Endothelial cell of umbilical vein (primary cell): ENCODE measurements at regions of chr5 and their contacts with region 1.

Region 1: DNA sequence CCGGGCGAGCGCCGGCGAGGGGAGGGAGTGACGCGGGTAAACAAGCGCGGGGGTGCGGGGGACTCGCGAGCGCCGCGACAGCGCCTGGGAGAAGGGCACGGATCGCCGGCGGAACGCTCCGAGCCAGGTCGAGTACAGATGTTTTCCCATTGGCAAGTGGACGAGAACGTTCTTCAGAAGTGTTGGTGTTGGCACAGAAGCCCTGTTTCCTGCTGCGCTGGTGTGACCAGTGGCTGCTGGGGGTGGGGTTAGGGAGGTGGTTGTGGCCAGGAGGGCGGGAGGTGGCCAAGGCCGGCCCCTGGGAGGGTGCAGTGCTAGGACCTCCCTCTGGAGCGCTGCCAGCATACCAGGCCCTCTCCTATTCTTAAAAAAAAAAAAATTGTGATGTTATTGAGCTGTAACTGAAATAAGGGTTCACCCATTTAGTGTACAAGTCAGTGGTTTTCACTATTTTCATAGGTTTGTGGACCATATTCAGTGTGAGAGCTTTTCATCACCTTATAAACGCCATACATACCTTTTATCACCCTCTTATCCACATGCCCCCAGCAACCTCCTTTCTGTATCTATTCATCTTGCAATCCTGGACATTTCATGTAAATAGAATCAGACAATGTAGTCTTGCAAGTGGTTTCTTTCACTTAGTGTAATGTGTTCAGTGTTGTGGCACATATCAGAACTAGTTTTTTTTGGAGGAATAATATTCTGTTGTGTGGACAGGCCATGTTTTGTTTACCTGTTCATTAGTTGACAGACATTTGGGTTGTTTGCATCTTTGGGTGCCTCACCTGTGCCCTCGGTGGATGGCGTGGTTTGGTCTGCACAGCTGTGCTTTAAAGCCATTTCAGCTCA is 1.1 kb downstream of the SQSTM1 start:
- DNase-seq: peak; percentile 93
- H3K4me3 ChIP-seq: peak overlapping the region; percentile 49 to 90 (median 82)
- H3K27ac ChIP-seq: peak overlapping the region; percentile 96
- H3K4me1 ChIP-seq: peaks cover 37% of the 10 kb centered on the region
- H3K27me3 ChIP-seq: no peaks in the 10 kb centered on the region
- CTCF ChIP-seq: no peak
- POLR2A ChIP-seq: peak; percentile 85

Region 2: DNA sequence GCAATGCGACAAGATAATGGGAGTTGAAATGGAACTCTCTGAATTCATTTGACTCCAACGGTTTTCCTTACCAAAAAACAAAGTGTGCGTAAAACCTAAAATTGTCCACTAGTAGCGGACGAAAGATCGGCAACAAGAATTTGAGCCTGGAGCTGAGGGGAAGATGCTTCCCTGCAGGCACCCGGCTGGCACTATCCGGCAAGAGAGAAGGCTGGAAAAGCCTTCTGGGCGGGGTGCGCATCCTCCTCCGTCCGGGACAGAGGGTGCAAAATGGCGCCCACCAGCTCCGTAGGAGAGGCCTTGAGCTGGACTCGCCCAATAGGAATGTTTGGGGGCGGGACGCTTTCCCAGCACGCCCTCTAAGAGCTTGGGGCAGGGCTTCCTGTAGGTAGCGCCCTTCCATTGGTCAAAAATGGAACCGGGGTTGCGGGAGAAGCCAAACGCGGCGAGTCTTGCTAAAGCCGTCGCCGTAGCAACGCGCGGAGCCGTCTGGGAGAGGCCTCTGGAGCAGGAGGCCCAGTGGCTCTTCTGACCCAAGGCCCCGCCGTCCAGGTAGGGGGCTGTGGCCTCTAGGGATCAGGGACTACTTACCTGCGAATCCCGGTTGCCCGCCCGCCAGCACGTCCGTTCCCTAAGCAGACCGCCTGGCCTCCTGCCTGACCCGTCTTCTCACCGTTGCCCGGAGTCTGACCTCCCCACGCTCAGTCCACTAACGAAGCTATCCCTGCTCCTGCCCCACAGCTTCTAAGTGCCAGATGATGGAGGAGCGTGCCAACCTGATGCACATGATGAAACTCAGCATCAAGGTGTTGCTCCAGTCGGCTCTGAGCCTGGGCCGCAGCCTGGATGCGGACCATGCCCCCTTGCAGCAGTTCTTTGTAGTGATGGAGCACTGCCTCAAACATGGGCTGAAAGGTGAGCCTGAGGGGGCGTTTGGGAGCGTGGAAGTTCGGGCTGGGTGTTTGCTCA is 262.2 kb before region 1 on chr5:
- CTCF ChIA-PET with region 1: no interaction called
- POLR2A ChIA-PET with region 1: interaction called, 3 read pairs
- dilution Hi-C with region 1: no loop called
- intact Hi-C with region 1: loop called (anchors 5 kb)
- DNase-seq: peak; percentile 98
- H3K4me3 ChIP-seq: peak overlapping the region; percentile 22 to 83 (median 48)
- H3K27ac ChIP-seq: peak overlapping the region; percentile 56
- H3K4me1 ChIP-seq: peaks cover 13% of the 10 kb centered on the region
- H3K27me3 ChIP-seq: no peaks in the 10 kb centered on the region
- CTCF ChIP-seq: no peak
- POLR2A ChIP-seq: peak; percentile 90

Region 3: GRCh38 chr5:179678223-179679013 is 143.4 kb before region 1 on chr5:
- CTCF ChIA-PET with region 1: no interaction called
- POLR2A ChIA-PET with region 1: no interaction called
- dilution Hi-C with region 1: no loop called
- intact Hi-C with region 1: loop called (anchors 2 kb)
- DNase-seq: peak; percentile 96
- H3K4me3 ChIP-seq: peak overlapping the region; percentile 62 to 64 (median 63)
- H3K27ac ChIP-seq: peak overlapping the region; percentile 35
- H3K4me1 ChIP-seq: no peaks in the 10 kb centered on the region
- H3K27me3 ChIP-seq: no peaks in the 10 kb centered on the region
- CTCF ChIP-seq: no peak
- POLR2A ChIP-seq: peak; percentile 98

Region 4: GRCh38 chr5:179732417-179732917 is 89.3 kb before region 1 on chr5 and contains the start of gene MAML1:
- CTCF ChIA-PET with region 1: interaction called, 3 read pairs
- POLR2A ChIA-PET with region 1: interaction called, 11 read pairs
- dilution Hi-C with region 1: no loop called
- intact Hi-C with region 1: loop called (anchors 1 kb)
- DNase-seq: peak; percentile 100
- H3K4me3 ChIP-seq: peak within 1 kb of the TSS; percentile 64 to 92 (median 77)
- H3K27ac ChIP-seq: peak within 1 kb of the TSS; percentile 70
- H3K4me1 ChIP-seq: peaks cover 28% of the 10 kb centered on the region
- H3K27me3 ChIP-seq: no peaks in the 10 kb centered on the region
- CTCF ChIP-seq: no peak
- POLR2A ChIP-seq: peak; percentile 83
- total RNA-seq, gene MAML1: 29.0 and 30.1 TPM in 2 replicates

Region 5: GRCh38 chr5:179858586-179859427 is 37.0 kb after region 1 on chr5 and contains the start of gene MRNIP:
- CTCF ChIA-PET with region 1: no interaction called
- POLR2A ChIA-PET with region 1: interaction called, 4 read pairs
- dilution Hi-C with region 1: no loop called
- intact Hi-C with region 1: loop called (anchors 1 kb)
- DNase-seq: peak; percentile 97
- H3K4me3 ChIP-seq: peak within 1 kb of the TSS; percentile 60 to 97 (median 75)
- H3K27ac ChIP-seq: no peak within 1 kb of the TSS
- H3K4me1 ChIP-seq: no peaks in the 10 kb centered on the region
- H3K27me3 ChIP-seq: no peaks in the 10 kb centered on the region
- CTCF ChIP-seq: peak in 1 of 2 donors; percentile 9
- POLR2A ChIP-seq: peak; percentile 82
- total RNA-seq, gene MRNIP: 17.6 and 19.1 TPM in 2 replicates